ENCODE measurements at regions of chr6 and their contacts with region 1.

Region 1: GRCh38 chr6:136226027-136226673 is 24.0 kb downstream of the MTFR2 start:
- DNase-seq: peak; percentile 66
- H3K4me3 Mint-ChIP-seq: no peak overlapping the region
- H3K27ac Mint-ChIP-seq: no peak overlapping the region
- H3K4me1 Mint-ChIP-seq: peaks cover 7% of the 10 kb centered on the region
- H3K27me3 Mint-ChIP-seq: no peaks in the 10 kb centered on the region

Region 2: DNA sequence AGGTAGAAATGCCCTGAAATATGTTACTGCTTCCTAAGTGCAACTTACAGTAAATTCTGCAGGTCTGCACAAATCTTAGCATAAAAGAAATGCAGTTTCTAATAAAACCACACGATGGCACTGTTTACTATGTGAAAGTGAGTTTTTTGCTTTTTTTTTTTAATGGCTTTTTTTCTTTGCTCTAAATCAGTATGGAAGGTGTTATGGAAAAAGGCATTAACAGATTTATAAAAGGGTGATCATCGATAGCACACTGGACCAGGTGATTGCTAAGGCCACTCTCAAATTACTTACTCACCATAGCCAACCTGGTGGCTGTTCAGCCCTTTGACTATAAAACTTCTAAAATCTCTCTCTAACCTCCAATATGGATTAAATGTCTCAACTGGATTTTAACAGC is 774.5 kb before region 1 on chr6:
- CTCF ChIA-PET with region 1: interaction called, 7 read pairs
- intact Hi-C with region 1: loop called (anchors 1 kb)
- DNase-seq: no peak
- H3K4me3 Mint-ChIP-seq: no peak overlapping the region
- H3K27ac Mint-ChIP-seq: no peak overlapping the region
- H3K4me1 Mint-ChIP-seq: no peaks in the 10 kb centered on the region
- H3K27me3 Mint-ChIP-seq: no peaks in the 10 kb centered on the region

Region 3: GRCh38 chr6:135675862-135676261 is 550.3 kb before region 1 on chr6:
- CTCF ChIA-PET with region 1: interaction called, 11 read pairs
- intact Hi-C with region 1: loop called (anchors 1 kb)
- DNase-seq: peak; percentile 58
- H3K4me3 Mint-ChIP-seq: no peak overlapping the region
- H3K27ac Mint-ChIP-seq: no peak overlapping the region
- H3K4me1 Mint-ChIP-seq: peaks cover 10% of the 10 kb centered on the region
- H3K27me3 Mint-ChIP-seq: peaks cover 1% of the 10 kb centered on the region

Region 4: GRCh38 chr6:136031982-136032381 is 194.2 kb before region 1 on chr6:
- CTCF ChIA-PET with region 1: interaction called, 3 read pairs
- intact Hi-C with region 1: loop called (anchors 2 kb)
- DNase-seq: peak; percentile 26
- H3K4me3 Mint-ChIP-seq: no peak overlapping the region
- H3K27ac Mint-ChIP-seq: no peak overlapping the region
- H3K4me1 Mint-ChIP-seq: no peaks in the 10 kb centered on the region
- H3K27me3 Mint-ChIP-seq: no peaks in the 10 kb centered on the region

Region 5: GRCh38 chr6:136317021-136317694 is 91.0 kb after region 1 on chr6:
- CTCF ChIA-PET with region 1: interaction called, 11 read pairs
- intact Hi-C with region 1: loop called (anchors 2 kb)
- DNase-seq: peak; percentile 77
- H3K4me3 Mint-ChIP-seq: no peak overlapping the region
- H3K27ac Mint-ChIP-seq: no peak overlapping the region
- H3K4me1 Mint-ChIP-seq: no peaks in the 10 kb centered on the region
- H3K27me3 Mint-ChIP-seq: no peaks in the 10 kb centered on the region

Region 6: GRCh38 chr6:136524936-136525413 is 298.8 kb after region 1 on chr6:
- CTCF ChIA-PET with region 1: no interaction called
- intact Hi-C with region 1: no loop called
- DNase-seq: no peak
- H3K4me3 Mint-ChIP-seq: no peak overlapping the region
- H3K27ac Mint-ChIP-seq: no peak overlapping the region
- H3K4me1 Mint-ChIP-seq: peaks cover 23% of the 10 kb centered on the region
- H3K27me3 Mint-ChIP-seq: peaks cover 10% of the 10 kb centered on the region